ENCODE measurements at regions of chr14 and their contacts with region 1.

Region 1: GRCh38 chr14:64434528-64434927 is 30.8 kb upstream of the AKAP5 start:
- DNase-seq: no peak
- ATAC-seq: no peak
- H3K4me3 ChIP-seq: no peak overlapping the region
- H3K27ac ChIP-seq: no peak overlapping the region
- H3K4me1 ChIP-seq: peaks cover 11% of the 10 kb centered on the region
- H3K27me3 ChIP-seq: no peaks in the 10 kb centered on the region
- CTCF ChIP-seq: no peak

Region 2: GRCh38 chr14:64095620-64096019 is 338.9 kb before region 1 on chr14:
- CTCF ChIA-PET with region 1: no interaction called
- POLR2A ChIA-PET with region 1: no interaction called
- intact Hi-C with region 1: no loop called
- DNase-seq: no peak
- ATAC-seq: no peak
- H3K4me3 ChIP-seq: no peak overlapping the region
- H3K27ac ChIP-seq: no peak overlapping the region
- H3K4me1 ChIP-seq: peaks cover 7% of the 10 kb centered on the region; the same call in 1 of the 2 replicates
- H3K27me3 ChIP-seq: no peaks in the 10 kb centered on the region
- CTCF ChIP-seq: no peak

Region 3: DNA sequence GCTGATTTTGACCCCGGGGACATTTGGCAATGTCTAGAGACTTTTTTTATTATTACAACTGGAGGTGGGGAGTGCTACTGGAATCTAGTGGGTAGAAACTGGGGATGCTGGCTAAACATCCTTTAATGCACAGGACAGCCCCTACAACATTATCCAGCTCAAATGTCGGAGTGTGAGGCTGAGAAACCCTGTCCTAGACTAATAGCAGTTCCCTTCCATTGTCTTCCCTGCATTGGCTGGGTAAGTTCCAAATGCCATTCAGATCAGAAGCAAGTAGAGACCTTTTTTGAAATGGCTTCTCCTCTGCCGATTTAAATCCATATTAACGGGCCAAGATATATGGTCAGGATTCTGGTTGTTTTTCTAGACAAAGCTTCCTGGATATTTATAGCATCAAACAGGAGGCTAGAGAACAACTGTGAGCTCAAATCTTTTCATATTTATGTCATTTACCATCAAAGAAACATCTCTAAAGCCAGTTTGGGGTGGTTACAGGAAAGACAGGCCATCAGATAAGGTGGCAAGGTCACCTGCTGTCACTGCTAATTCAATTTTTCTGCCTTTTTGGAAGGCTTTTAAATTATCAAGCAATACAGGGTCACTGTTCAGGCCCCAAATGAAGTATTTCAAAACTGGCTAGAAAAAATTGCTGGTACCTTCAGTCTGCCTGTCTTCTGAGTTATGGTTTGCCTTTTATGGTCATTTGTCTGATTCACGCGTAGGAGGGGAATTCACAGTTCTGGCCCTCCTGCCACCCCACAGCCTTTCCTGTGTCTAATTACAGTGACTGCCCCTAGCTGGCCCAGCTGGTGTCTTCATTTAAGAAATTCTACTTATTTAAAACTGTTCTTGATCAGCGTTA is 10.7 kb after region 1 on chr14:
- CTCF ChIA-PET with region 1: interaction called, 13 read pairs
- POLR2A ChIA-PET with region 1: no interaction called
- intact Hi-C with region 1: no loop called
- DNase-seq: no peak
- ATAC-seq: peak; percentile 38; the same call in 1 of the 2 replicates
- H3K4me3 ChIP-seq: no peak overlapping the region
- H3K27ac ChIP-seq: no peak overlapping the region
- H3K4me1 ChIP-seq: no peaks in the 10 kb centered on the region
- H3K27me3 ChIP-seq: no peaks in the 10 kb centered on the region
- CTCF ChIP-seq: no peak

Measured in PC-3 (cell line).